Activated CD8-positive, alpha-beta T cell treated with anti-CD3 and anti-CD28 coated beads, Interleukin-2, amount 10 ng/mL, durations not matched to agents 7 days and 5 days (primary cell): ENCODE measurements at regions of chr19 and their contacts with region 1.

Region 1: GRCh38 chr19:20039203-20039723 is at the start of gene ZNF682:
- DNase-seq: peak; percentile 97
- ATAC-seq: peak; percentile 100
- H3K4me3 Mint-ChIP-seq: peak within 1 kb of the TSS; percentile 96
- H3K27ac Mint-ChIP-seq: peak within 1 kb of the TSS; percentile 99
- H3K4me1 Mint-ChIP-seq: peaks cover 15% of the 10 kb centered on the region
- H3K27me3 Mint-ChIP-seq: no peaks in the 10 kb centered on the region
- total RNA-seq, gene ZNF682: 10.9 to 13.6 TPM

Region 2: GRCh38 chr19:20060282-20060681 is 21.0 kb after region 1 on chr19:
- CTCF ChIA-PET with region 1: no interaction called
- POLR2A ChIA-PET with region 1: no interaction called
- DNase-seq: no peak
- ATAC-seq: no peak
- H3K4me3 Mint-ChIP-seq: no peak overlapping the region
- H3K27ac Mint-ChIP-seq: no peak overlapping the region
- H3K4me1 Mint-ChIP-seq: no peaks in the 10 kb centered on the region
- H3K27me3 Mint-ChIP-seq: no peaks in the 10 kb centered on the region

Region 3: GRCh38 chr19:20077791-20078463 is 38.7 kb after region 1 on chr19 and contains the start of gene ZNF90:
- CTCF ChIA-PET with region 1: no interaction called
- POLR2A ChIA-PET with region 1: interaction called, 13 read pairs
- DNase-seq: peak; percentile 95
- ATAC-seq: peak; percentile 99
- H3K4me3 Mint-ChIP-seq: peak within 1 kb of the TSS; percentile 90
- H3K27ac Mint-ChIP-seq: peak within 1 kb of the TSS; percentile 82
- H3K4me1 Mint-ChIP-seq: peaks cover 21% of the 10 kb centered on the region
- H3K27me3 Mint-ChIP-seq: no peaks in the 10 kb centered on the region
- total RNA-seq, gene ZNF90: 16.2 to 17.0 TPM